B cell (primary cell): ENCODE measurements at regions of chr12 and their contacts with region 1.

Region 1: DNA sequence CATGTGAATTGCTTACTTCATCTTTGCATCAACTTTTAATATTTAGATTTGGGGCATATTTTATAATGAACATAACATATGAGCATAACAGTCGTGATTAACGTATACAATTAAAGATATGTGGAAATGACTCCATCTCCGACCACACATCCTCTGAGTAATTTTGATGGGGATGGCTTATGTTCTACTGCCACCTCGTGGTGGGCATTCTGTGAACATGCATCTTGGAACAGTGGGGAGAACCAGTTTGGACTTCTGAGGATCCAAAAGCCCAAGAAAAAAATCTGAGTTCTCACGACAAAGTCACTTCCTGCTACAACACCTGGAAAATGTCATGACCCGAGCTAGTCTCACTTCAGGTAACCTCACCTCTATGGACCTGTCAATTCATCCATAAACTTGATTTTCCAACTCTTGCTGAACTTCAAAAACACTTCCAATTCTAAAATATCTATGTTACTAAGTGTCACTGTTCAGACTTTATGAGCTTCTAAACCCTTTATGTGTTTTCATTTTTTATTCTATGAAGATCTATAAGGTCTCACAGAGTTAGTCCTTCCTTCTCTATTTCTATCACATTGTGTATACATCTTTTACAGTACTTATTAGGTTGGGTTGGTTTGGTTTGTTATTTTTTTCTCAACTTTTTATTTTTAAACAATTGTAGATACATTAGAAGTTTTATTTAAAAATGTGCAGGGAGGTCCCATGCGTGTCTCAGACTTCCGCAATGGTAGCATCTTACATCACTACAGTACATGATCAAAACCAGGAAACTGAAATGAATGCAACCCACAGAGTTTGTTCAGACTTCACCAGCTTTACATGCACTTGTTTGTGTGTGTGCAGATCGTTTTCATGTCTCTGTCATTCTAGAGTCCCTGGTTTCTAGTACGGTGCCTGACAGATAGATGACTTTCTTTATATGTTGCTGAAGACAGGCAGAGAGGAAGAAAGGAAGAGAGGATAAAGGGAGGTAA is 38.2 kb upstream of the STAB2 start:
- DNase-seq: peak; percentile 81
- ATAC-seq: peak; percentile 62
- H3K4me3 ChIP-seq: no peak overlapping the region
- H3K4me3 Mint-ChIP-seq: no peak overlapping the region
- H3K27ac ChIP-seq: no peak overlapping the region
- H3K27ac Mint-ChIP-seq: no peak overlapping the region
- H3K4me1 ChIP-seq: no peaks in the 10 kb centered on the region
- H3K4me1 Mint-ChIP-seq: peaks cover 9% of the 10 kb centered on the region
- H3K27me3 ChIP-seq: peaks cover 0 to 4% (median 0%) of the 10 kb centered on the region in 4 experiments
- H3K27me3 Mint-ChIP-seq: peaks cover 14% of the 10 kb centered on the region
- CTCF ChIP-seq: peak; percentile 98

Region 2: DNA sequence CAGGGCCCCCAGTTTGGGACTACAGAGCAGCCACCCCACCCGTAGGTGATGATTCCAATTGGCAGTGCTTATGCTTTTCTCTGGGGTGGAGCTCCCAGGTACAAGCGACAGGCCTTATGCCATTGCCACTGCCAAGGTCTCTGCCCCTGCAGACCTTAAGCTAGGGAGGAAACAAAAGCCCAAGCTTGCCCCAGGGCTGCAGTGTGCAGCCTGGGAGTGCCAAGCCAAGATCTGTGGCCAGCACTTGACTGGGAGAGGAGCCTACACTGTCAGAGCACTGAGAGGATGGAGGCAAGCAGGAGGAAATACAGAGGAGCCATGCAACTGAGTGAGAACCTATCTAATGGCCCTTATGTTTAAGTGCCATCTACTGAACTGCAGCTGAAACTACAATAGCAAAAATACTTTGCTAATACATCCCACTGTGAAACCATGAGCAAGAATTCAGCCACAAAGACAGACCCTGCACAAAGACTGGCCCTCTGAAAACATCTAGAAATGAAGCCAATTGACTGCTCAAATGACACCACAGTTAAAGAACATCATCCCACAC is 609.2 kb before region 1 on chr12:
- CTCF ChIA-PET with region 1: interaction called, 260 read pairs
- POLR2A ChIA-PET with region 1: no interaction called
- intact Hi-C with region 1: no loop called
- DNase-seq: no peak
- ATAC-seq: no peak
- H3K4me3 ChIP-seq: no peak overlapping the region
- H3K4me3 Mint-ChIP-seq: no peak overlapping the region
- H3K27ac ChIP-seq: no peak overlapping the region
- H3K27ac Mint-ChIP-seq: no peak overlapping the region
- H3K4me1 ChIP-seq: no peaks in the 10 kb centered on the region
- H3K4me1 Mint-ChIP-seq: no peaks in the 10 kb centered on the region
- H3K27me3 ChIP-seq: peaks cover 0 to 16% (median 7%) of the 10 kb centered on the region in 4 experiments
- H3K27me3 Mint-ChIP-seq: peaks cover 45% of the 10 kb centered on the region
- CTCF ChIP-seq: no peak

Region 3: DNA sequence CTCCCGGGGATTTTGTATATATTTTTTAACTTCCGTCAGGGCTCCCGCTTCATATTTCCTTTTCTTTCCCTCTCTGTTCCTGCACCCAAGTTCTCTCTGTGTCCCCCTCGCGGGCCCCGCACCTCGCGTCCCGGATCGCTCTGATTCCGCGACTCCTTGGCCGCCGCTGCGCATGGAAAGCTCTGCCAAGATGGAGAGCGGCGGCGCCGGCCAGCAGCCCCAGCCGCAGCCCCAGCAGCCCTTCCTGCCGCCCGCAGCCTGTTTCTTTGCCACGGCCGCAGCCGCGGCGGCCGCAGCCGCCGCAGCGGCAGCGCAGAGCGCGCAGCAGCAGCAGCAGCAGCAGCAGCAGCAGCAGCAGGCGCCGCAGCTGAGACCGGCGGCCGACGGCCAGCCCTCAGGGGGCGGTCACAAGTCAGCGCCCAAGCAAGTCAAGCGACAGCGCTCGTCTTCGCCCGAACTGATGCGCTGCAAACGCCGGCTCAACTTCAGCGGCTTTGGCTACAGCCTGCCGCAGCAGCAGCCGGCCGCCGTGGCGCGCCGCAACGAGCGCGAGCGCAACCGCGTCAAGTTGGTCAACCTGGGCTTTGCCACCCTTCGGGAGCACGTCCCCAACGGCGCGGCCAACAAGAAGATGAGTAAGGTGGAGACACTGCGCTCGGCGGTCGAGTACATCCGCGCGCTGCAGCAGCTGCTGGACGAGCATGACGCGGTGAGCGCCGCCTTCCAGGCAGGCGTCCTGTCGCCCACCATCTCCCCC is 590.7 kb before region 1 on chr12:
- CTCF ChIA-PET with region 1: interaction called, 20 read pairs
- POLR2A ChIA-PET with region 1: no interaction called
- intact Hi-C with region 1: no loop called
- DNase-seq: peak; percentile 71
- ATAC-seq: peak; percentile 60
- H3K4me3 ChIP-seq: peak overlapping the region in 4 of 5 experiments; percentile 21 to 70 (median 50)
- H3K4me3 Mint-ChIP-seq: peak overlapping the region; percentile 86
- H3K27ac ChIP-seq: no peak overlapping the region
- H3K27ac Mint-ChIP-seq: no peak overlapping the region
- H3K4me1 ChIP-seq: peaks cover 36 to 53% of the 10 kb centered on the region in 2 donors
- H3K4me1 Mint-ChIP-seq: peaks cover 38% of the 10 kb centered on the region
- H3K27me3 ChIP-seq: peaks cover 1 to 93% (median 78%) of the 10 kb centered on the region in 4 experiments
- H3K27me3 Mint-ChIP-seq: peaks cover 86% of the 10 kb centered on the region
- CTCF ChIP-seq: no peak

Region 4: DNA sequence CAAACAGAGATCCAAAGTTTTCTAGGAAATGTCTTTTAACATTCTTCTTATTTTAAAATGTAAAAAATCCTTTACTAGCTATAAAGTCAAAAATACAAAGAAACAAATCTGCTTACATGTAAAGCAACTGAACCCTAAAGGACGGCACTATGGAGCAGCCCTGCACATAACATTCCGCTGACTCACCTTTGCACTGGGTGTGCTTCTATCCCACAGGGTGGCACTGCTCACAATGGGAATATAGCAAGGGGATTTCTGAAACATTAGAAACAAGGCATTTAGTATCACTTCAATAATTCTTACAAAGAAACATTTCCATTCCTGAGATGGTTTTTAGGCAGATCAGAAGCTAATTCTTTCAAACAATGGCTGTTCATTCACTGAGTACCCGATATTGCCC is 147.5 kb before region 1 on chr12:
- CTCF ChIA-PET with region 1: interaction called, 8 read pairs
- POLR2A ChIA-PET with region 1: no interaction called
- intact Hi-C with region 1: loop called (anchors 1 kb)
- DNase-seq: peak; percentile 18
- ATAC-seq: peak; percentile 28
- H3K4me3 ChIP-seq: no peak overlapping the region
- H3K4me3 Mint-ChIP-seq: no peak overlapping the region
- H3K27ac ChIP-seq: no peak overlapping the region
- H3K27ac Mint-ChIP-seq: no peak overlapping the region
- H3K4me1 ChIP-seq: peaks cover 5 to 7% of the 10 kb centered on the region in 2 donors
- H3K4me1 Mint-ChIP-seq: peaks cover 19% of the 10 kb centered on the region
- H3K27me3 ChIP-seq: no peaks in the 10 kb centered on the region
- H3K27me3 Mint-ChIP-seq: no peaks in the 10 kb centered on the region
- CTCF ChIP-seq: no peak

Region 5: DNA sequence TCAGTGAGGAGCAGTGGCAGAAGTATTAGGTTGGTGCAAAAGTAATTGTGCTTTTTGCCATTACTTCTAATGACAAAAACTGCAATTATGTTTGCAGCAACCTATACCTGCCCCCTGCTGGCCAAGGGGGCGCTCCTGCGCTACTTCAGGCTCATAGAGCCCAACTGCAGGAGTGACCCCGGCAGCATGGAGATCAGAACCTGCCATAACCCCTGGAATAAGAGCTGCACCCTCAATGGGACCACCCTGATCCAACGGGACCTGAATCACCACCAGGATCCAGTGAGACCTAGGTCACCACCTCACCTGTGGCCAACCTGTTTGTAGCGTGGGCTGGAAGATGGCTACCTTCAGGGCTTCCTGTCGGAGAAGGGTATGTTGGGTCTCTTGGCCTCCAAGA is 44.9 kb before region 1 on chr12:
- CTCF ChIA-PET with region 1: interaction called, 85 read pairs
- POLR2A ChIA-PET with region 1: no interaction called
- intact Hi-C with region 1: no loop called
- DNase-seq: peak; percentile 83
- ATAC-seq: peak; percentile 37
- H3K4me3 ChIP-seq: no peak overlapping the region
- H3K4me3 Mint-ChIP-seq: no peak overlapping the region
- H3K27ac ChIP-seq: no peak overlapping the region
- H3K27ac Mint-ChIP-seq: peak overlapping the region; percentile 59
- H3K4me1 ChIP-seq: peaks cover 0 to 5% of the 10 kb centered on the region in 2 donors
- H3K4me1 Mint-ChIP-seq: peaks cover 44% of the 10 kb centered on the region
- H3K27me3 ChIP-seq: peaks cover 0 to 4% (median 0%) of the 10 kb centered on the region in 4 experiments
- H3K27me3 Mint-ChIP-seq: no peaks in the 10 kb centered on the region
- CTCF ChIP-seq: peak; percentile 89

Region 6: GRCh38 chr12:103530307-103531066 is 18.4 kb before region 1 on chr12:
- CTCF ChIA-PET with region 1: interaction called, 26 read pairs
- POLR2A ChIA-PET with region 1: no interaction called
- intact Hi-C with region 1: no loop called
- DNase-seq: no peak
- ATAC-seq: no peak
- H3K4me3 ChIP-seq: no peak overlapping the region
- H3K4me3 Mint-ChIP-seq: peak overlapping the region; percentile 20
- H3K27ac ChIP-seq: no peak overlapping the region
- H3K27ac Mint-ChIP-seq: peak overlapping the region; percentile 50
- H3K4me1 ChIP-seq: peaks cover 0 to 3% of the 10 kb centered on the region in 2 donors
- H3K4me1 Mint-ChIP-seq: peaks cover 8% of the 10 kb centered on the region
- H3K27me3 ChIP-seq: no peaks in the 10 kb centered on the region
- H3K27me3 Mint-ChIP-seq: peaks cover 4% of the 10 kb centered on the region
- CTCF ChIP-seq: no peak

Region 7: GRCh38 chr12:103560604-103561573 is 12.0 kb after region 1 on chr12:
- CTCF ChIA-PET with region 1: interaction called, 15 read pairs
- POLR2A ChIA-PET with region 1: no interaction called
- intact Hi-C with region 1: no loop called
- DNase-seq: no peak
- ATAC-seq: no peak
- H3K4me3 ChIP-seq: no peak overlapping the region
- H3K4me3 Mint-ChIP-seq: no peak overlapping the region
- H3K27ac ChIP-seq: no peak overlapping the region
- H3K27ac Mint-ChIP-seq: no peak overlapping the region
- H3K4me1 ChIP-seq: no peaks in the 10 kb centered on the region
- H3K4me1 Mint-ChIP-seq: no peaks in the 10 kb centered on the region
- H3K27me3 ChIP-seq: peaks cover 0 to 6% (median 0%) of the 10 kb centered on the region in 4 experiments
- H3K27me3 Mint-ChIP-seq: peaks cover 49% of the 10 kb centered on the region
- CTCF ChIP-seq: no peak

Region 8: DNA sequence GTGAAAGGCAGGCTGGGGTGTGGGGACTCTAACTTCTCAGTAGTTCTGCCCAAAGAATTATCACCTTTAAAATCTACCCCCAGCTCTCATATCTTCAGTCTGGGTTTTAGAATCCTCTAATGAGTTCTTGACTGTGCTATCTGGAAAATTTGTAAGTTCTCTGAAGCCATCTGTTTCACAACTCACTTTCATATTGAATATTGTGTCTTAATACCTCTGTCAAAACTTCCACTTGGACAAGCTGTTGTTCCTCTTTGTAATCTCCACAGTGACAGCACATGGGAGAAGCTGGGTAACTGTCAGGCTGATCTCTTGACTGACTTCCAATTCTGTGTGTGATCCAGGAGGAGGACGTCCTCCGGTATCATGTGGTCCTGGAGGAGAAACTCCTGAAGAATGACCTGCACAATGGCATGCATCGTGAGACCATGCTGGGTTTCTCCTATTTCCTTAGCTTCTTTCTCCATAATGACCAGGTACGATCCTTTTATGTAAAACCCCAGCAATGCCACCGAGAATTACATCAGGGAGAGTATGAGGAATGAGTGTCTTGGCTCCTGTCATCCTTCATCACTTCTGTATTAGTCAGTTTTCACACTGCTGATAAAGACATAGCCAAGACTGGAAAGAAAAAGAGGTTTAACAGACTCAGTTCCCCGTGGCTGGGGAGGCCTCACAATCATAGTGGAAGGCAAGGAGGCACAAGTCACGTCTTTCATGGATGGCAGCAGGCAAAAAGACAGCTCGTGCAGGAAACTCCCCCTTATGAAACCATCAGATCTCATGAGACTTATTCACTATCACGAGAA is 150.0 kb after region 1 on chr12:
- CTCF ChIA-PET with region 1: no interaction called
- POLR2A ChIA-PET with region 1: no interaction called
- intact Hi-C with region 1: no loop called
- DNase-seq: no peak
- ATAC-seq: no peak
- H3K4me3 ChIP-seq: no peak overlapping the region
- H3K4me3 Mint-ChIP-seq: no peak overlapping the region
- H3K27ac ChIP-seq: no peak overlapping the region
- H3K27ac Mint-ChIP-seq: no peak overlapping the region
- H3K4me1 ChIP-seq: no peaks in the 10 kb centered on the region
- H3K4me1 Mint-ChIP-seq: no peaks in the 10 kb centered on the region
- H3K27me3 ChIP-seq: peaks cover 0 to 3% (median under 1%) of the 10 kb centered on the region in 4 experiments
- H3K27me3 Mint-ChIP-seq: peaks cover 11% of the 10 kb centered on the region
- CTCF ChIP-seq: no peak